MCF 10A (cell line): ENCODE measurements at regions of chr6 and their contacts with region 1.

Region 1: DNA sequence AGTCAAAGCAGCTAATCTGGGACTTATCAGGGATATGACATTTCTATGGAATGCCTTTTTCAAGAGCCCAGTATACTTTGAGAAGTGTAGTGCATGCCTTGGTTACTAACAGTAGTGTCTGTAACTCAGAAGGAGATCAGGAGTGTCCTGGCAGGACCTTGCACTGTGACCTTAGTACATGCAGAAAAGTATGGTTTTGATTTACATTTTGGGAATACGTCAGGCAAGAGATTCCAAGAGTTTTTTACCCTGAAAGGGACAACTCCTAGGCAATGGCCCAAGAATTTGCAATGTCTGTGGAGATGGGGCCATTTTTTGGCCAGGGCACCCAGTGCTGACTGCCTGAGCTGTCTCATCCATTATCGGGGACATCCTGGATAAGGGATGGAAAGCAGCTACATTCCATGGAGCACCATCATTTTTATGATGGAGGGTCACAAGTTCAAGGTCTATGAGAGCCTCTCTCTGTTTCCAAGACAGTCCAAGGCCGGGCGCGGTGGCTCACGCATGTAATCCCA is 80.2 kb downstream of the FAM50B start:
- DNase-seq: no peak
- H3K4me3 Mint-ChIP-seq: no peak overlapping the region
- H3K27ac Mint-ChIP-seq: no peak overlapping the region
- H3K4me1 Mint-ChIP-seq: peaks cover 15% of the 10 kb centered on the region
- H3K27me3 Mint-ChIP-seq: no peaks in the 10 kb centered on the region
- CTCF ChIP-seq: no peak

Region 2: GRCh38 chr6:3697609-3698008 is 231.7 kb before region 1 on chr6:
- CTCF ChIA-PET with region 1: no interaction called
- POLR2A ChIA-PET with region 1: no interaction called
- intact Hi-C with region 1: no loop called
- DNase-seq: peak; percentile 83
- H3K4me3 Mint-ChIP-seq: no peak overlapping the region
- H3K27ac Mint-ChIP-seq: peak overlapping the region; percentile 18
- H3K4me1 Mint-ChIP-seq: peaks cover 26% of the 10 kb centered on the region
- H3K27me3 Mint-ChIP-seq: no peaks in the 10 kb centered on the region
- CTCF ChIP-seq: no peak

Region 3: GRCh38 chr6:3742426-3743344 is 186.7 kb before region 1 on chr6:
- CTCF ChIA-PET with region 1: interaction called, 41 read pairs
- POLR2A ChIA-PET with region 1: interaction called, 3 read pairs
- intact Hi-C with region 1: no loop called
- DNase-seq: peak; percentile 79
- H3K4me3 Mint-ChIP-seq: no peak overlapping the region
- H3K27ac Mint-ChIP-seq: peak overlapping the region; percentile 52
- H3K4me1 Mint-ChIP-seq: peaks cover 31% of the 10 kb centered on the region
- H3K27me3 Mint-ChIP-seq: no peaks in the 10 kb centered on the region
- CTCF ChIP-seq: peak; percentile 92

Region 4: GRCh38 chr6:3913077-3913957 is 16.0 kb before region 1 on chr6:
- CTCF ChIA-PET with region 1: interaction called, 12 read pairs
- POLR2A ChIA-PET with region 1: interaction called, 14 read pairs
- intact Hi-C with region 1: no loop called
- DNase-seq: peak; percentile 99
- H3K4me3 Mint-ChIP-seq: peak overlapping the region; percentile 41
- H3K27ac Mint-ChIP-seq: peak overlapping the region; percentile 93
- H3K4me1 Mint-ChIP-seq: peaks cover 48% of the 10 kb centered on the region
- H3K27me3 Mint-ChIP-seq: no peaks in the 10 kb centered on the region
- CTCF ChIP-seq: no peak

Region 5: GRCh38 chr6:3977875-3978711 is 48.8 kb after region 1 on chr6:
- CTCF ChIA-PET with region 1: interaction called, 13 read pairs
- POLR2A ChIA-PET with region 1: no interaction called
- intact Hi-C with region 1: no loop called
- DNase-seq: peak; percentile 69
- H3K4me3 Mint-ChIP-seq: no peak overlapping the region
- H3K27ac Mint-ChIP-seq: no peak overlapping the region
- H3K4me1 Mint-ChIP-seq: no peaks in the 10 kb centered on the region
- H3K27me3 Mint-ChIP-seq: no peaks in the 10 kb centered on the region
- CTCF ChIP-seq: peak; percentile 43

Region 6: GRCh38 chr6:4008324-4009047 is 79.1 kb after region 1 on chr6:
- CTCF ChIA-PET with region 1: interaction called, 3 read pairs
- POLR2A ChIA-PET with region 1: no interaction called
- intact Hi-C with region 1: loop called (anchors 1 kb)
- DNase-seq: peak; percentile 79
- H3K4me3 Mint-ChIP-seq: no peak overlapping the region
- H3K27ac Mint-ChIP-seq: no peak overlapping the region
- H3K4me1 Mint-ChIP-seq: peaks cover 17% of the 10 kb centered on the region
- H3K27me3 Mint-ChIP-seq: no peaks in the 10 kb centered on the region
- CTCF ChIP-seq: peak; percentile 55

Region 7: GRCh38 chr6:4388675-4389074 is 459.3 kb after region 1 on chr6:
- CTCF ChIA-PET with region 1: no interaction called
- POLR2A ChIA-PET with region 1: no interaction called
- intact Hi-C with region 1: no loop called
- DNase-seq: no peak
- H3K4me3 Mint-ChIP-seq: no peak overlapping the region
- H3K27ac Mint-ChIP-seq: no peak overlapping the region
- H3K4me1 Mint-ChIP-seq: peaks cover 5% of the 10 kb centered on the region
- H3K27me3 Mint-ChIP-seq: no peaks in the 10 kb centered on the region
- CTCF ChIP-seq: no peak